ENCODE measurements at regions of chr1 and their contacts with region 1.

Region 1: DNA sequence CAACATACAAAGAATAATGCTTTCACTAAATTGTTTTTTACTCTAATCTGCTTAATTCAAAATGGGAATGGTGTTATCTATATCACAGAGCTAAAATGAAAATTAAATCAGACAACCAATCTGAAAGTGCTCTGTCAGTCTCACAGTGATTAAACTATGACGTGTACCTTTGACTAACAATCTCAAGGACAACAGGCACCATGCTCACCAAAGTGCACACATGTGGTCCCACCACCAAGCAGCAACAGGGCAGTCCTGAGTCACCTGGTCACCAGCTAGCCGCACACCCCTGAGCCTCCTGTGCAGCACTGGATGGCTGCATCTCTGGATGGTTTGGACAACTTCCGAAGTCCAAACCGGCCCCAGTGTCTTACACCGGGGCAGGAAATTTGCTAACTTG is 54.5 kb upstream of the NADK start:
- DNase-seq: peak; percentile 27
- ATAC-seq: peak; percentile 76
- H3K4me3 ChIP-seq: no peak overlapping the region
- H3K27ac ChIP-seq: no peak overlapping the region
- H3K4me1 ChIP-seq: no peaks in the 10 kb centered on the region
- H3K27me3 ChIP-seq: no peaks in the 10 kb centered on the region
- CTCF ChIP-seq: no peak

Region 2: DNA sequence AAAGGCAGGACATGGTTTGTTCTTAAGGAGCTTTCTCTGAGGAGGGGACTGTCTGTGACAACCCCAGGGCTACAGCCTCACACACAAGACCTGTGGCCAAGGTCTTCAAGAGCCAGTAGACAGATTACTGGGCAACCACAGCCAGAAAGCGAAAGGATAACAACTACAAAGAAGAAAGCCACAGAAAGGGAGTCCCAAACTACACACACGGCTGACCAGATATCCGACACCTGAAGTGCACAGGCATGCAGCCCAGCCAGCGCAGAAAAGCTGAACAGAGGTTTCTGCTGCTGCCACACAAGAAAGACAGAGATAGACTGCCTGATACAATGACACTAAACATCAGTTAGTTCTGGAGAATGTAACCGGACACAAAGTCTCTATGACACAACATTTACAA is 33.1 kb before region 1 on chr1:
- CTCF ChIA-PET with region 1: no interaction called
- POLR2A ChIA-PET with region 1: interaction called, 21 read pairs
- intact Hi-C with region 1: no loop called
- DNase-seq: no peak
- ATAC-seq: no peak
- H3K4me3 ChIP-seq: no peak overlapping the region
- H3K27ac ChIP-seq: no peak overlapping the region
- H3K4me1 ChIP-seq: no peaks in the 10 kb centered on the region
- H3K27me3 ChIP-seq: no peaks in the 10 kb centered on the region
- CTCF ChIP-seq: no peak

Region 3: GRCh38 chr1:1815606-1816281 is 17.1 kb before region 1 on chr1:
- CTCF ChIA-PET with region 1: no interaction called
- POLR2A ChIA-PET with region 1: interaction called, 15 read pairs
- intact Hi-C with region 1: no loop called
- DNase-seq: no peak
- ATAC-seq: no peak
- H3K4me3 ChIP-seq: no peak overlapping the region
- H3K27ac ChIP-seq: no peak overlapping the region
- H3K4me1 ChIP-seq: no peaks in the 10 kb centered on the region
- H3K27me3 ChIP-seq: no peaks in the 10 kb centered on the region
- CTCF ChIP-seq: no peak